CD8-positive, alpha-beta T cell (primary cell): ENCODE measurements at regions of chr2 and their contacts with region 1.

Region 1: DNA sequence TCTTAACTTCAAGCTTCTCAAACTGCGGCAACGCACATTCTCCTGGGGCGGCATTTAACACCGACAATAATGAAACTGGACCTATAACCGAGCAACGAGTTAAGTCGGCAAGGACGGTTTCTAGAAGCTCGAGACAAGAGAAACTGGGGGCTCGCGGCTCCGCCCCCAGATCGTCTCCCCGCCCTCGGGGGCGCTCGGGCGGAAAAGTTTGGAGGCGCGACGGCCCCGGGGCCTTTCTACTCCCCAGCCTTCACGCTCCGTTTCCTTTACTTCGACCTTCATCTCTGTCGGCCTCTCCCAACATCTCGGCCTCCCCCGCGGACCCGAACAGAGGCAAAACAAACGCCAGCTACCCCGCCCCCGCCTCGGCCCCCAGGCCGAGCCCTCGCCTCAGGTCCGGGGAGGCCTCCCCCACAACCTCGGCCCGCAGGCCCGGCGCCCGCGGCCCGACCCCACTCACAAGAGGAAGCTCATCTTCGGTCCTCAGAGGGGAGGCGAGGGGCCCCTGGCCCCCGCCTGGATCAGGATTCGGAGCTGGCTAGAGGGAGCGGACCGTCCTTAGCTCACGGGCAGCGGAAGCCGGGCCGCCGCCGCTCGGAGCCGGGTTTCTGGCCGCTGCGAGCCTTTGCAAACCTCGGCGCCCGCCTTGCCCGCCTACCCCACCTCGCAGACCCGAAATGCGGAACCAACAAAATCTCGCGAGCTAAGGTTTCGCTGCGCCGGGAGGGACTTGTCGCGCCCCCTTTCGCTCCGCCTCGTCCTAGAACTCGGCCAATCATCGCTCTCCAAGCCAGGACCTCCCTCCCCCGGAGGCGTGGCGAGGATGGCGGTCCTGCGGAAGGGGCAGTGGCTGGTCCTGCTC is at the start of gene MOB1A:
- DNase-seq: peak; percentile 96 to 99 (median 98)
- ATAC-seq: peak; percentile 95
- H3K4me3 ChIP-seq: peak within 1 kb of the TSS; percentile 79 to 93
- H3K4me3 Mint-ChIP-seq: peak within 1 kb of the TSS; percentile 92
- H3K27ac ChIP-seq: peak within 1 kb of the TSS; percentile 95
- H3K27ac Mint-ChIP-seq: peak within 1 kb of the TSS; percentile 92
- H3K4me1 ChIP-seq: peaks cover 40% of the 10 kb centered on the region
- H3K4me1 Mint-ChIP-seq: peaks cover 36% of the 10 kb centered on the region
- H3K27me3 ChIP-seq: no peaks in the 10 kb centered on the region
- H3K27me3 Mint-ChIP-seq: no peaks in the 10 kb centered on the region
- CTCF ChIP-seq: no peak
- total RNA-seq, gene MOB1A: 181 to 197 TPM

Region 2: DNA sequence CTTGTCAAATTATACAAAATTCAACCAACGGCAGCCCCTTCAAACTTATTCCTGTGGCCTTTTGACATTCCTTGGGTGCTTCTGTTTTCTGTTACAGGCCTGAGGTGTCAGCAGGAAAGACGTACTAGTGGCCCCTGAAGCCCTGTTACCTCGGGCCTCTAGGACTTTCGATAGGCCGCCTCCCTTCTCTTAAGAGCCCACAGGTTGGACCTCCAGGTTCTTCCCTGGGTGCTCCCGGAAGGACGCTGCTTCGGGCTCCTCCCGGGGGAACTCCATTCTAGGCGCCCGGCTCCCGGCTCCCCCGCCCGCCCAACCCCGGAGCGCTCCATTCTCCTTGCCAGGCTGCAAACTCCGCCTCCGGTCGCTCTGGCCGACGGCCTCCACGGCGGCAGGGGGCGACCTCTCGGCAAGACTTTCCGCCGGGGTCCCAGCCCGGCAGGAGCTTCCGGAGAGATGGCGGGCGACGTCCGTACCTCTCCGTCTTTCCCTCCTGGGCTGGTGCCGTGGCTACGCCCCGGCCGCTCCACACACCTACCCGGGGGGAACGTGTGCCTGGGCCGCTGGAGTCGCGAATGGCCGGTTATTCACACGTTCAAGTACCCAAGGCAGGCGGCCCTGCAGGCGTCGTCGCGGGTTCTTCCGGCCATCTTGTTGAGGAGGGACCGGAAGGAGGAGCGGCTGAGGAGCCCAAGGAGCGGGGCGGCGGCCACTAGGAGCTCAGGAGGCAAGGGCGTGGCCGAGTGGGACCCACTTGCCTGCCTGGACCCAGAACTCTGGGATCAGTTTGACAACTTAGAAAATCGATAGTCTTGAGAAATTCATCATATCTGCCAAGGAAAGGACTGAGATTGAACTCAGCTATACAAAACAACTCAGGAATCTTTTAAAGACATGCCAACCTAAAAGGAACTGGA is 58.3 kb before region 1 on chr2:
- CTCF ChIA-PET with region 1: interaction called, 6 read pairs
- POLR2A ChIA-PET with region 1: interaction called, 13 read pairs
- intact Hi-C with region 1: loop called (anchors 1 kb)
- DNase-seq: peak; percentile 76 to 92 (median 83)
- ATAC-seq: peak; percentile 97
- H3K4me3 ChIP-seq: peak overlapping the region; percentile 94 to 96
- H3K4me3 Mint-ChIP-seq: peak overlapping the region; percentile 84
- H3K27ac ChIP-seq: peak overlapping the region; percentile 82 to 95
- H3K27ac Mint-ChIP-seq: peak overlapping the region; percentile 92
- H3K4me1 ChIP-seq: peaks cover 8% of the 10 kb centered on the region
- H3K4me1 Mint-ChIP-seq: peaks cover 7% of the 10 kb centered on the region
- H3K27me3 ChIP-seq: peaks cover 0 to 4% of the 10 kb centered on the region in 2 experiments
- H3K27me3 Mint-ChIP-seq: peaks cover 4% of the 10 kb centered on the region
- CTCF ChIP-seq: peak; percentile 47

Region 3: DNA sequence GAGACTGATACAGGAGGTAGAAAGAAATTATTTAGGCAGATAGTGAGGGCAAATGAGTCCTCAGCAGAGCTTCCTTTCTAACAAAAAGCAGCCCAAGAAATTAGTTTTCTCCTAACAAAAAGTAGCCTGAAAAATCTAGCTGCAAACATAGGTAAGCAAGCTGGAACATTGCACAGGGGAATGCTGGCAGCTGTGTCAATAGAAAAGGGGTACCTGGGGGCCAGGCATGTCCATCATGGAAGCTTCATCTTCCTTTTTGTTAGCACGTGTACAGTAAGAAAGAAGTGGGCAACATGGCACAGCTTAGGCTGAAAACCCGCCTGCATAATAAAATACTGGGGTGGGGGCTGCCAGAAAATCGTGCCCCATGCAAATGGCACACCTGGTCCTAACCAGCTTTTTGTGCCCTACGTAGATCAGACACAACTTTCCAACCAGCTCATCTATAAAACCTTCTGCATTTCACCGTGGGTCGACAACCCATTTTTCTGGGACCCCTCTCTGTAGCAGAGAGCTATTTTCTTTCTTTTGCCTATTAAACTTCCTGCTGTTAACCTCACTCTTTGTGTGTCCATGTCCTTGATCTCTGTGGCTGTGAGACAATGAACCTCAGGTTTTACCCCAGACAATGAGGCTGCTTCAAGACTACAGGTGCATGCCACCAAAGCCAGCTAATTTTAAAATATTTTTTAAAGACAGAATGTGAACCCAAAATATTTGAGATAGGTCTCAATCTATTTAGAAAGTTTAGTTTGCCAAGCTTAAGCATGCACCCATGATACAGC is 13.4 kb after region 1 on chr2:
- CTCF ChIA-PET with region 1: interaction called, 10 read pairs
- POLR2A ChIA-PET with region 1: interaction called, 41 read pairs
- intact Hi-C with region 1: no loop called
- DNase-seq: no peak
- ATAC-seq: no peak
- H3K4me3 ChIP-seq: no peak overlapping the region
- H3K4me3 Mint-ChIP-seq: no peak overlapping the region
- H3K27ac ChIP-seq: no peak overlapping the region
- H3K27ac Mint-ChIP-seq: no peak overlapping the region
- H3K4me1 ChIP-seq: no peaks in the 10 kb centered on the region
- H3K4me1 Mint-ChIP-seq: no peaks in the 10 kb centered on the region
- H3K27me3 ChIP-seq: no peaks in the 10 kb centered on the region
- H3K27me3 Mint-ChIP-seq: no peaks in the 10 kb centered on the region
- CTCF ChIP-seq: no peak

Region 4: GRCh38 chr2:74206180-74206688 is 27.8 kb after region 1 on chr2:
- CTCF ChIA-PET with region 1: interaction called, 5 read pairs
- POLR2A ChIA-PET with region 1: interaction called, 22 read pairs
- intact Hi-C with region 1: no loop called
- DNase-seq: peak in 7 of 9 experiments; percentile 3 to 82 (median 29)
- ATAC-seq: peak; percentile 91
- H3K4me3 ChIP-seq: peak overlapping the region; percentile 4 to 16
- H3K4me3 Mint-ChIP-seq: peak overlapping the region; percentile 68
- H3K27ac ChIP-seq: peak overlapping the region; percentile 49 to 97
- H3K27ac Mint-ChIP-seq: peak overlapping the region; percentile 95
- H3K4me1 ChIP-seq: peaks cover 26% of the 10 kb centered on the region
- H3K4me1 Mint-ChIP-seq: peaks cover 30% of the 10 kb centered on the region
- H3K27me3 ChIP-seq: no peaks in the 10 kb centered on the region
- H3K27me3 Mint-ChIP-seq: no peaks in the 10 kb centered on the region
- CTCF ChIP-seq: no peak

Region 5: DNA sequence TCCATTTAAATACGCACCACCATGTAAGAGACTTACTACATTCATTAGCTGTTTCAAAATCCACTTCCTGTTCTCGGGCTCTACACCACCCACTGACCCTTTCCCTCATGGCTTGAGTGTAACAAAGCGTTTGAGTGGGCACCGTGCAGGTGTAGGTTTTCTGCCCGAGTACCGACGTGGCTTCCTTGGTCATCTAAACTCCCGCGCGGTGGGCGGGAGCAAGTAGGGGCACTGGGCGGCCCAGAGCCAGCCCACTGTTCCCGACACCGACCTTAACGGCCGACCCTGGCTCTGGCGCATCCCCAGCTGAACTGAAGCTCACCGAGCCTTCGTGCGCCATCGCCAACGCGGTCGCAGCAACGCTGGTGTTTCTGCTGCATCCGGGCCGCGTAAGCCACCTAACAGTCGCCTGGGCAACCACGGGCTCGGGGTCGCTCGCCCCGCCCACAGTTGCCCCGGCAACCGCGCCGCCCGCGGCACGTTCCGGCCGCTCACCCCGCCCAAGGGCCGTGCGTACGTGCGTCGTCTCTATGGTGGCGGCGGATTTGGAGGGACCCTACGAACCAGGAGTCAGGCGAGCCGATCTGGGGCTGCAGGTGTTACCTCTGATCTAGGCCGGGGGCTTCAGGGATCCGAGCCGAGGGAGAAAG is 242.9 kb after region 1 on chr2 and contains the starts of genes C2orf81 and WDR54:
- CTCF ChIA-PET with region 1: no interaction called
- POLR2A ChIA-PET with region 1: no interaction called
- intact Hi-C with region 1: loop called in 1 of 2 experiments (anchors 1 kb)
- DNase-seq: peak; percentile 90 to 98 (median 95)
- ATAC-seq: peak; percentile 88
- H3K4me3 ChIP-seq: peak within 1 kb of the TSS; percentile 72 to 92
- H3K4me3 Mint-ChIP-seq: peak within 1 kb of the TSS; percentile 98
- H3K27ac ChIP-seq: peak within 1 kb of the TSS; percentile 96 to 97
- H3K27ac Mint-ChIP-seq: peak within 1 kb of the TSS; percentile 96
- H3K4me1 ChIP-seq: peaks cover 20% of the 10 kb centered on the region
- H3K4me1 Mint-ChIP-seq: peaks cover 17% of the 10 kb centered on the region
- H3K27me3 ChIP-seq: no peaks in the 10 kb centered on the region
- H3K27me3 Mint-ChIP-seq: no peaks in the 10 kb centered on the region
- CTCF ChIP-seq: no peak
- total RNA-seq, gene C2orf81: 0.75 to 1.8 TPM
- total RNA-seq, gene WDR54: 18.4 to 19.8 TPM